ENCODE measurements at regions of chr19 and their contacts with region 1.

Region 1: GRCh38 chr19:6108721-6109633 is 1.3 kb downstream of the RFX2 start:
- DNase-seq: peak; percentile 68 to 85 (median 84)
- ATAC-seq: peak; percentile 12 to 30
- H3K4me3 ChIP-seq: peak overlapping the region; percentile 84
- H3K27ac ChIP-seq: peak overlapping the region; percentile 91
- H3K4me1 ChIP-seq: no peaks in the 10 kb centered on the region
- H3K27me3 ChIP-seq: no peaks in the 10 kb centered on the region

Region 2: DNA sequence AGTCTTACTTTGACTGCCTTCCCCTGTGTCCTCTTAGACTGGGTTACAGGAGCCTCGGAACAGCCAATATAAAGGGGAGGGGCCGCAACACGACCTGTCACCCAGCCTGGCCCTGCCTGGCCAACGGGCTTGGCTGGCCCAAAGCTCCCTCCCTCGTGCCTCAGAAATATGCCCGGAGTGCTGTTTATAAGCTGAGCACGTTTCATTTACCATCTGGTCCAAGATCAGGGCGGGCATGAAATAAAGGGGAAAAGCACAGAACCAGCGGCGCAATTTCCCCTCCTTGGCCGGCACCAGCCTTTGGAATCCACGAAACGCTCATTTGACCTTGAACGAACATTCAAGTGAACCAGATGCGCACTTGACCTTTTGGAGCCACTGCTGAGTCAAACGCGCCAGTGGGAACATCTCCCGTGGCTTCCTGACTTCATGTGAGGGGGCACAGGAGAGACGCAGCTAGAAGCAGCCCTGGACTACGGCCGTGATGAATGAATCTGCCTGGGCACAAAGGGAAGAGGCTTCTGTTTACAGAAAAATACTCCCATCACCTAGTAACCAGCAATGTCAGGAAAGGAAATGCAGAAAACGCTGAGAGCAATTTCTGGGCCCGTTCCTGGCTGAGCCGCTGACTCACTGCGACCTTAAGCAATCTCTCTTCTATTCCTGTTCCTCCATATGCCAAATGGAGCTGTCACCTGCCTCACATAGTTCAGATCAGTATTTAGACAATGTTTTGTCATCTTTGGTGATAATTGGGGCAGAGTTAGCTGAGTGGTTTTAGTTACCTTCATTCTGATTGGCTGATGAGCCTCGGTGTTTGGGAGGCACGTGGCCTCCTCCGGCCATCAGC is 52.0 kb before region 1 on chr19:
- intact Hi-C with region 1: loop called in 2 of 4 experiments (anchors 5 kb)
- DNase-seq: peak; percentile 82 to 86 (median 84)
- ATAC-seq: peak; percentile 81 to 91
- H3K4me3 ChIP-seq: no peak overlapping the region
- H3K27ac ChIP-seq: peak overlapping the region; percentile 93
- H3K4me1 ChIP-seq: peaks cover 37% of the 10 kb centered on the region
- H3K27me3 ChIP-seq: no peaks in the 10 kb centered on the region

Region 3: GRCh38 chr19:6066661-6067646 is 42.0 kb before region 1 on chr19:
- intact Hi-C with region 1: loop called in 2 of 4 experiments (anchors 5 kb)
- DNase-seq: peak; percentile 96 to 98 (median 98)
- ATAC-seq: peak; percentile 88 to 91
- H3K4me3 ChIP-seq: no peak overlapping the region
- H3K27ac ChIP-seq: peak overlapping the region; percentile 97
- H3K4me1 ChIP-seq: peaks cover 29% of the 10 kb centered on the region
- H3K27me3 ChIP-seq: no peaks in the 10 kb centered on the region